GM12878 (cell line): ENCODE measurements at regions of chr9 and their contacts with region 1.

Region 1: GRCh38 chr9:116661037-116661954 is 25.8 kb upstream of the TRIM32 start:
- DNase-seq: peak; percentile 24
- ATAC-seq: peak; percentile 90
- H3K4me3 ChIP-seq: no peak overlapping the region
- H3K27ac ChIP-seq: no peak overlapping the region
- H3K4me1 ChIP-seq: no peaks in the 10 kb centered on the region
- H3K27me3 ChIP-seq: no peaks in the 10 kb centered on the region
- CTCF ChIP-seq: peak; percentile 63 to 83 (median 66)
- EP300 ChIP-seq: no peak
- POLR2A ChIP-seq: no peak
- RAD21 ChIP-seq: peak; percentile 84

Region 2: GRCh38 chr9:115883457-115884329 is 777.6 kb before region 1 on chr9:
- CTCF ChIA-PET with region 1: no interaction called
- POLR2A ChIA-PET with region 1: no interaction called
- RAD21 ChIA-PET with region 1: no interaction called
- SMC1A ChIA-PET with region 1: no interaction called
- in situ Hi-C with region 1: no loop called
- intact Hi-C with region 1: loop called (anchors 2 kb)
- DNase-seq: no peak
- ATAC-seq: peak; percentile 63
- H3K4me3 ChIP-seq: no peak overlapping the region
- H3K27ac ChIP-seq: no peak overlapping the region
- H3K4me1 ChIP-seq: no peaks in the 10 kb centered on the region
- H3K27me3 ChIP-seq: no peaks in the 10 kb centered on the region
- CTCF ChIP-seq: peak; percentile 26 to 44 (median 32); a peak in 4 of 6 replicates
- EP300 ChIP-seq: no peak
- POLR2A ChIP-seq: no peak
- RAD21 ChIP-seq: peak; percentile 42; the same call in 1 of the 2 replicates

Region 3: DNA sequence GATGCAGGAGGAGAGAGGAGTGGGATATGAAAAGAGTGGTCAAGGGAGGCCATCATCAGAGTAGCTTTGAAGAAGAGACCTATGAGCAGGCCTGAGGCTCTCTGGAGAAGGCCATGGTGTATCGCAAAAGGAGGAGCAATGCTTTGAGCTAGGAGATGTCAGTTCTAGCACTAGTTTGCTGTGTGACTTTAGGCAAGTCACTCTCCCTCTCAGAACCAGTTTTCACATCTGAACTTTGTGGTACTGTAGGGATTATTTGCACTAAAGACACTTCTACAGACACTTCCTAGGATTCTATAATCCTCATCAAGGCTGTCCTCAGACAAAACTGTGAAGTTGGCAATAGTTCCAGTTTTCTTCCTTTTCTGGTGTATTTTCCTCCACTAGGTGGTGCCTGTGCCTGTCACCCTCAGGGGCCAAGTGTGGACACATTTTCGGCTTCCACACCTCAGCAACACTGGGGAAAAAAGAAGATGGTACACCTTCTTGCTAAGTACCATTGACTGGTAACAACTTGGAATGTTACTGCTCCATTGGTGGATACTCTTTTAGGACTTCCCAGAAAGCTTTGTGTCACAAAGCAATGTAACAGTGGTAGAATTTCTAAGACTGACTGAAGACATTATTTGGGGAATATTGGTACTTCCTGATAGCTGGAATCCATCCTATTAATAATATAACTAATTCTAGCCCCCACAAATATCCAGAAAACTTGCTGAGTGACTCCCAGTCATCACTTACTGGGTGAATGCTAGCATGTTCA is 497.8 kb before region 1 on chr9:
- CTCF ChIA-PET with region 1: interaction called, 3 read pairs
- POLR2A ChIA-PET with region 1: no interaction called
- RAD21 ChIA-PET with region 1: no interaction called
- SMC1A ChIA-PET with region 1: no interaction called
- in situ Hi-C with region 1: no loop called
- intact Hi-C with region 1: loop called (anchors 2 kb)
- DNase-seq: no peak
- ATAC-seq: peak; percentile 54
- H3K4me3 ChIP-seq: no peak overlapping the region
- H3K27ac ChIP-seq: no peak overlapping the region
- H3K4me1 ChIP-seq: no peaks in the 10 kb centered on the region
- H3K27me3 ChIP-seq: no peaks in the 10 kb centered on the region
- CTCF ChIP-seq: peak; percentile 36 to 42 (median 41); a peak in 4 of 6 replicates
- EP300 ChIP-seq: no peak
- POLR2A ChIP-seq: no peak
- RAD21 ChIP-seq: peak; percentile 48

Region 4: GRCh38 chr9:116494815-116495634 is 166.3 kb before region 1 on chr9:
- CTCF ChIA-PET with region 1: no interaction called
- POLR2A ChIA-PET with region 1: no interaction called
- RAD21 ChIA-PET with region 1: no interaction called
- SMC1A ChIA-PET with region 1: no interaction called
- in situ Hi-C with region 1: no loop called
- intact Hi-C with region 1: loop called (anchors 10 kb)
- DNase-seq: no peak
- ATAC-seq: peak; percentile 82
- H3K4me3 ChIP-seq: no peak overlapping the region
- H3K27ac ChIP-seq: no peak overlapping the region
- H3K4me1 ChIP-seq: no peaks in the 10 kb centered on the region
- H3K27me3 ChIP-seq: no peaks in the 10 kb centered on the region
- CTCF ChIP-seq: peak; percentile 60 to 79 (median 77)
- EP300 ChIP-seq: no peak
- POLR2A ChIP-seq: no peak
- RAD21 ChIP-seq: peak; percentile 55

Region 5: DNA sequence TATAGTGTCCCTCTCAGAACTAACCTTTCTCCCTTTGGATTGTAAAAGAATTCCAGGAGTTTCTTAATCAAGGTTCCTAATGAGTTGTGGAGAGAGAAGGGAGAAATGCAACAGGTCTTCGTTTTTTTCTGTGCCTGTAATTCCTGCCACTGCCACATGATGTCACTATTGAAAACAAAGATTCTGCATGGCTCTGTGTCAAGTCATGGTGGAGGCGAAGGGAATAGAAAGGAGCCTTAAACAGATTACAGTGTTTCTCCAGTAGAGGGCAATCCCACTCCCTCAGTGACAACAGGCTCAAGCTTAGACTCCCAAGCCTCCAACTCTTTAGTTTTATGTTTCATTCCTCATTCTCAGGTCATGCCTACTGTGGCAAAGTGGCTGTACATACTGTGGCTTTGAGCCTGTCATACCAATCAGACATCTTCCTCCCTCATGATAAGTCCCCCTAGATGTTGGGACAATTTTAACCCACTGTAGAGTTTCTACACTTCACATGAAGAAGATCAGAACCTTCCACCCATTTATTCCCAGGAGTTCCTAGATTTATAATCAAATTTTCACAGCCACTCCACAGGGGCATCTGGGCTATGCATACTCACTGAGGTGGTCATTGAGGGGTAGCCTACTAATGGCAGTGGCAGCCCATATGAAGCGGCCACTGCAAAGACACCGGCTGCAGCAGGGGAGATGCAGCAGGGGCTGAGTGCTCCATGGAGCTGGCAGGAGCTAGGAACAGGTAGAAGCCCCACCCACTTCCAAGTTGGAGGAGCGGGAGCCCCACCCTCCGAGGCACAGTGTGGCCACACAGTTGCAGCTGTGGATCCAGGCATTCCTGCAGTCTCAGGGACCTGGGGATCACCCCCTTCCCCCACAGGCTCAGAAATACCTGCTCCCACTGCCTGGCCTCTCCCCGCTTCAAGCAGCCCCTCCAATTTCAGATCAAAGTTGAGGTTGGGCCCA is 71.6 kb before region 1 on chr9:
- CTCF ChIA-PET with region 1: interaction called, 4 read pairs
- POLR2A ChIA-PET with region 1: no interaction called
- RAD21 ChIA-PET with region 1: no interaction called
- SMC1A ChIA-PET with region 1: no interaction called
- in situ Hi-C with region 1: no loop called
- intact Hi-C with region 1: loop called (anchors 2 kb)
- DNase-seq: no peak
- ATAC-seq: peak; percentile 80
- H3K4me3 ChIP-seq: no peak overlapping the region
- H3K27ac ChIP-seq: no peak overlapping the region
- H3K4me1 ChIP-seq: no peaks in the 10 kb centered on the region
- H3K27me3 ChIP-seq: no peaks in the 10 kb centered on the region
- CTCF ChIP-seq: peak; percentile 10 to 75 (median 39); a peak in 4 of 6 replicates
- EP300 ChIP-seq: no peak
- POLR2A ChIP-seq: no peak
- RAD21 ChIP-seq: peak; percentile 28; the same call in 1 of the 2 replicates

Region 6: DNA sequence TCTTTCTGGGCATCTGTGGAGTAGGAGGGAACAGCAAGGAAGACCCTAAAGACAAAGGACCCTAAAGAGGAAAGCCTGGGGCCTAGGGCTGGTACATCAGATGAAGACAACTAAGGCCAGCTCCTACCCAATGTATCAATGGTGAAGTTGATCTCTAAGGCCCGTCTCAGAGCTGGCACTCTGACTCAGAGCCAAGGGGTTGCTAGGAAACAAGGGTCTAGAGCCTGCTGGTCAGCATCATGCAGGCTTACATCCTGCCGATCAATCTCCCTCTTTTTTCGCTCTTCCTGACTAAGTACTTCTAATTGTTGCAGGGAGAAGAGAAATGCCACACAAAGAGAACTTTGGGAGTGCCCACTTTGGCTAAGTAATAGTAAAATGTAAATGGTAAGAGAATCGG is 52.0 kb after region 1 on chr9:
- CTCF ChIA-PET with region 1: no interaction called
- POLR2A ChIA-PET with region 1: no interaction called
- RAD21 ChIA-PET with region 1: no interaction called
- SMC1A ChIA-PET with region 1: no interaction called
- in situ Hi-C with region 1: loop called (anchors 5 kb)
- intact Hi-C with region 1: no loop called
- DNase-seq: no peak
- ATAC-seq: no peak
- H3K4me3 ChIP-seq: no peak overlapping the region
- H3K27ac ChIP-seq: no peak overlapping the region
- H3K4me1 ChIP-seq: no peaks in the 10 kb centered on the region
- H3K27me3 ChIP-seq: no peaks in the 10 kb centered on the region
- CTCF ChIP-seq: no peak
- EP300 ChIP-seq: no peak
- POLR2A ChIP-seq: no peak
- RAD21 ChIP-seq: no peak